HepG2 (cell line): ENCODE measurements at regions of chr6 and their contacts with region 1.

Region 1: DNA sequence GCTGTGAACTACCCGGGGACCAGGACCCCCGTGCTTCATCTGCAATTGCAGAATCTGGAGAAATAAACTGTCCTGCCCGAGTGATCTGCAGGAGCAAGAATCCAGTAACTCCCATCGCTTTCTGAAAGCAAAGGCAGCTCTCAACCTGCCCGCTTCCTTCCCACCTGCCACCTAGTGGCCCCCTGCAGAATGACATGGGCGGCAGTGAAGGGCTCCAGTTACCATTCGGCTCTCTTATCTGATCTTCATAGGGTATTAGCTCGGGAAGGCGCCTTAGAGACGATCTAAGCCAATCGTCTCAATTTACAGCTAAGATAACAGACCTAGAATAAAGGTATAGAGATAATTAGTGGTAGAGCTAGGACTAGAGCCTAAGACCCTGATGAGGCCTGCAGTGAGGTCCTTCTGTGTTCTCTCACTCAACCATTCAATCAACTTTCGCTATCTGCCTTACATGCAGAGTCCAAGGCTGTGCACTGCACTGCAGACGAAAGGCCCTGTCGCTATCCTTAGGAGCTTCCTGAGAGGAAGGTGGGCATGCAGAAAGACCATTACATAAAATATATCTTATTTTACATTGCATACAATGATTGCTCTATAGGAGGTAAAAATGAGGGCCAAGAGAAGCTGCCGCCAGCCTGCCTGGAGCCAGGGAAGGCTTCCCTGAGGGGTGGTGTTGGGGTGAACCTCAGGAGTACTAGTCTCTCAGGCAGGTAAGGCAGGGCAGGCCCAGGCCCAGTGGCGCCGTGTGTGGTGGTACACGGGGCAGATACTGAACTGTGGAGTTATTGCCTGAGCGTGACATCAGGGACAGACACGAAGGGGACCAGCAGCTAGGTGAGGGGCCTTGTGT is 7.1 kb upstream of the PSMG4 start:
- DNase-seq: peak; percentile 77
- ATAC-seq: peak; percentile 78
- H3K4me3 ChIP-seq: peak overlapping the region; percentile 6 to 57 (median 20); a peak in 4 of 6 replicates
- H3K27ac ChIP-seq: no peak overlapping the region
- H3K4me1 ChIP-seq: peaks cover 46% of the 10 kb centered on the region
- H3K27me3 ChIP-seq: peaks cover 1 to 50% of the 10 kb centered on the region in 2 experiments; a peak in 3 of 5 replicates
- CTCF ChIP-seq: peak; percentile 96
- EP300 ChIP-seq: peak in 1 of 2 experiments; percentile 35; a peak in 1 of 4 replicates
- POLR2A ChIP-seq: no peak
- RAD21 ChIP-seq: peak; percentile 89

Region 2: GRCh38 chr6:3118353-3119039 is 133.2 kb before region 1 on chr6 and contains the start of gene BPHL:
- CTCF ChIA-PET with region 1: no interaction called
- POLR2A ChIA-PET with region 1: interaction called, 9 read pairs
- in situ Hi-C with region 1: no loop called
- intact Hi-C with region 1: loop called (anchors 2 kb)
- DNase-seq: peak; percentile 87
- ATAC-seq: peak; percentile 89
- H3K4me3 ChIP-seq: peak within 1 kb of the TSS; percentile 82 to 84 (median 84)
- H3K27ac ChIP-seq: peak within 1 kb of the TSS; percentile 88
- H3K4me1 ChIP-seq: peaks cover 35% of the 10 kb centered on the region
- H3K27me3 ChIP-seq: no peaks in the 10 kb centered on the region; a peak in 1 of 5 replicates
- CTCF ChIP-seq: peak; percentile 63
- EP300 ChIP-seq: no peak
- POLR2A ChIP-seq: peak; percentile 84 to 96
- RAD21 ChIP-seq: peak; percentile 67
- total RNA-seq, gene BPHL: 39.5 and 48.6 TPM in 2 replicates

Region 3: GRCh38 chr6:3139090-3139903 is 112.4 kb before region 1 on chr6:
- CTCF ChIA-PET with region 1: no interaction called
- POLR2A ChIA-PET with region 1: interaction called, 9 read pairs
- in situ Hi-C with region 1: loop called (anchors 5 kb)
- intact Hi-C with region 1: no loop called
- DNase-seq: peak; percentile 98
- ATAC-seq: peak; percentile 94
- H3K4me3 ChIP-seq: peak overlapping the region in 1 of 3 experiments; percentile 24; a peak in 2 of 6 replicates
- H3K27ac ChIP-seq: peak overlapping the region; percentile 90
- H3K4me1 ChIP-seq: peaks cover 67% of the 10 kb centered on the region
- H3K27me3 ChIP-seq: no peaks in the 10 kb centered on the region
- CTCF ChIP-seq: peak; percentile 20; the same call in 1 of the 2 replicates
- EP300 ChIP-seq: peak; percentile 80 to 95; a peak in 3 of 4 replicates
- POLR2A ChIP-seq: peak; percentile 40 to 44; a peak in 1 of 4 replicates
- RAD21 ChIP-seq: peak; percentile 53

Region 4: GRCh38 chr6:3162565-3163247 is 89.0 kb before region 1 on chr6:
- CTCF ChIA-PET with region 1: interaction called, 3 read pairs
- POLR2A ChIA-PET with region 1: interaction called, 14 read pairs
- in situ Hi-C with region 1: no loop called
- intact Hi-C with region 1: loop called (anchors 2 kb)
- DNase-seq: peak; percentile 80
- ATAC-seq: peak; percentile 91
- H3K4me3 ChIP-seq: peak overlapping the region; percentile 67 to 84 (median 72)
- H3K27ac ChIP-seq: peak overlapping the region; percentile 89
- H3K4me1 ChIP-seq: peaks cover 71% of the 10 kb centered on the region
- H3K27me3 ChIP-seq: no peaks in the 10 kb centered on the region
- CTCF ChIP-seq: peak; percentile 58
- EP300 ChIP-seq: no peak; a peak in 1 of 4 replicates
- POLR2A ChIP-seq: peak; percentile 66 to 91
- RAD21 ChIP-seq: peak; percentile 81

Region 5: DNA sequence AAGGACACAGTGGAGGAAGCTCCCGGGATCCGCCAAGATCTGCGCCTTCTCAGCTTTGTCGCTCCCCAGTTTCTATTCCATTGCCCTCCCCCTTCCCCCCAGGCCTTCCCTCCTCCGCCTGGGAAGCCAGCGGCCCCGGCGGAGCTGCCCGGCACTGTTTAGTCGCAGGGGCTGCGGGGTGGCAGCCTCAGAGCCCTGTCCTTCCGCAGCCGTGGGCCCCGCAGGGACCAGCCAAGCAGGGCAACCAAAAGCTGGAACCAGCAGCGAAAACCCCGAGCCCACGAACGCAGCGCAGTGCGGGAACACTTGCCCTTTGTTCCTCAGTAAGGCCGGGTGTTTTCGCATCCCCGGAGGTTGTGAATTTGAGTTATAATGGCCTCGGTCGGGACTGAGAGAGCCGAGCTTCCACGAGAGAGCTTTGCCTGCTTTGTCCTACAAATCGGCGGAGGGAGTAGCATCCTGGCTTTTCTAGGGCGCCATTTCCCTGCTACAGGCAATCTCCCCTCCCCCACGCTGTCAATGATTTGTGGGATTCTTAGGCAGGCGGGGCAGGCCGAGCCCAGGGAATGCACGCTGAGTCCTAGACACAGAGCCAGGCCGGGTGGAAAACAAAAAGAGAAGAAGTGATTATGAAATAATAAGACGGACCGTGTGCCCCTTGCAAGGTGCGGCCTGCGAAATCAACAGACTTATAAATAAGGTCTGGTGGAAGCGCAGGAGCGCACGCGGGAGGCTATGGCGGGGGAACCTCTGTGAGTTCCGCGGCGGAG is 20.3 kb before region 1 on chr6:
- CTCF ChIA-PET with region 1: no interaction called
- POLR2A ChIA-PET with region 1: interaction called, 19 read pairs
- in situ Hi-C with region 1: no loop called
- intact Hi-C with region 1: no loop called
- DNase-seq: peak; percentile 80
- ATAC-seq: peak; percentile 77
- H3K4me3 ChIP-seq: peak overlapping the region; percentile 57 to 81 (median 74)
- H3K27ac ChIP-seq: no peak overlapping the region
- H3K4me1 ChIP-seq: peaks cover 53% of the 10 kb centered on the region
- H3K27me3 ChIP-seq: peaks cover 26 to 89% of the 10 kb centered on the region in 2 experiments
- CTCF ChIP-seq: no peak
- EP300 ChIP-seq: peak in 1 of 2 experiments; percentile 63; a peak in 1 of 4 replicates
- POLR2A ChIP-seq: peak in 1 of 2 experiments; percentile 51; a peak in 2 of 4 replicates
- RAD21 ChIP-seq: no peak